Activated T-helper 2 cell treated with anti-CD3 and anti-CD28 coated beads, Interferon-gamma antibody, Interleukin-2, Interleukin-4, amounts not matched to agents 10 μg/mL and 5 μg/mL and 100 μg/mL, durations not matched to agents 14 hours and 24 hours and 36 hours (primary cell): ENCODE measurements at regions of chr12 and their contacts with region 1.

Region 1: GRCh38 chr12:15227004-15227679 is 5.9 kb upstream of the RERG start:
- DNase-seq: no peak
- H3K4me3 Mint-ChIP-seq: no peak overlapping the region
- H3K27ac Mint-ChIP-seq: no peak overlapping the region
- H3K4me1 Mint-ChIP-seq: no peaks in the 10 kb centered on the region
- H3K27me3 Mint-ChIP-seq: peaks cover 33% of the 10 kb centered on the region

Region 2: GRCh38 chr12:13436696-13437391 is 1790.3 kb before region 1 on chr12:
- intact Hi-C with region 1: no loop called
- DNase-seq: no peak
- H3K4me3 Mint-ChIP-seq: no peak overlapping the region
- H3K27ac Mint-ChIP-seq: no peak overlapping the region
- H3K4me1 Mint-ChIP-seq: no peaks in the 10 kb centered on the region
- H3K27me3 Mint-ChIP-seq: peaks cover 1% of the 10 kb centered on the region

Region 3: GRCh38 chr12:15268927-15269552 is 41.9 kb after region 1 on chr12:
- intact Hi-C with region 1: loop called (anchors 1 kb)
- DNase-seq: no peak
- H3K4me3 Mint-ChIP-seq: no peak overlapping the region
- H3K27ac Mint-ChIP-seq: no peak overlapping the region
- H3K4me1 Mint-ChIP-seq: no peaks in the 10 kb centered on the region
- H3K27me3 Mint-ChIP-seq: peaks cover 4% of the 10 kb centered on the region